Posterior vena cava (tissue), 2 donors: ENCODE measurements at regions of chr15 and their contacts with region 1.

Region 1: DNA sequence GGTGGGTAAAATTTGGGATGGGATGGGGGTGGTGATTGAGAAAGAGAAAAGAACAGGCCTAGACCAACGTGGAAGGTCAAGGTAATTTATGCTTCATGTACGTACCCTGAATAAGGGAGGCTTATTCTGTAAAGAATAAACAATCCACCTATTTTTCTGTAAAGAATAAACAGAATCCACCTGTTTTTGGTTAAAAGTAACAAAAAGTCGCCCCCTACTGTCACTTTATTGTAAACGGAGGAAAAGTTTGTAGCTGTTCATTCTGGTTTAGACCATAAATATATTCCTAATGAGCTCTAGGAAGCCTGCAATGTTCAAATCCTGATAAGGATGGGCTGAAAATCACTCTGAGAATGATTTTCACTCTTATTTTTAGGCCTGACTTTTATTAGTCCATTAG is 23.5 kb upstream of the SQOR start:
- DNase-seq: no peak

Region 2: DNA sequence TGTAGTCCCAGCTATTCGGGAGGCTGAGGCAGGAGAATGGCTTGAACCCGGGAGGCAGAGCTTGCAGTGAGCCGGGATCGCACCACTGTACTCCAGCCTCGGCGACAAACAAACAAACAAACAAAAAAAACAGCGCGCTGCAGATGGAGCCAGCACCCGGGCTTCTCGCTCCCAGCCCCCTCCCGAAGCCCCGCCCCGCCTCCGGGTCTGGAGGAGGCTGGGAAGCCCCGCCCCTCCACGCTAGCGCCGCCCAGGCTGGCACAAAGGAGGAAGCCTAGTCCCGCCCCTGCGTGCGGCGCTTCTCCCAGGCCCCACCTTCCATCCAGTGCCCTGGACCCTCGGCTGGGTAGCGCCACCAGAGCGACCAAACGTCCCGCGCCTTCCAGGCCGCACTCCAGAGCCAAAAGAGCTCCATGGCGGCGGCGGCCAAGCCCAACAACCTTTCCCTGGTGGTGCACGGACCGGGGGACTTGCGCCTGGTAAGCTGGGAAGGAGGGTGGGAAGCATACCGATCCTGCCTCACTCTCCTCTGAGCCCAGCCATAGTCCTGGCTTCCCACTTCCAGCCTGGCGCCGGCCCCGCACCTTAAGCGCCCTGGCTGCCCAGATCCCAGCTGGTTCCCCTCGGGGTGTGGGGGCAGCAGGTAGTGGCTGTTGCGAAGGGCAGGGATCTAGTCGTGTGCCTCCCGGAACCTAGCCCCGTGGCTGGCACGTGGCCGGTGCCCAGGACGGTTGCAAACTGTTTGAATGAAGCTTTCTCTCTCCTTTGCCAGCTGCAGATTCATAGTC is 588.2 kb before region 1 on chr15 and contains the start of gene SORD:
- intact Hi-C with region 1: no loop called
- DNase-seq: peak; percentile 97
- total RNA-seq, gene SORD: 6.7 to 9.3 TPM

Region 3: GRCh38 chr15:45457641-45458433 is 153.5 kb before region 1 on chr15:
- intact Hi-C with region 1: loop called in 1 of 2 experiments (anchors 10 kb)
- DNase-seq: no peak

Region 4: DNA sequence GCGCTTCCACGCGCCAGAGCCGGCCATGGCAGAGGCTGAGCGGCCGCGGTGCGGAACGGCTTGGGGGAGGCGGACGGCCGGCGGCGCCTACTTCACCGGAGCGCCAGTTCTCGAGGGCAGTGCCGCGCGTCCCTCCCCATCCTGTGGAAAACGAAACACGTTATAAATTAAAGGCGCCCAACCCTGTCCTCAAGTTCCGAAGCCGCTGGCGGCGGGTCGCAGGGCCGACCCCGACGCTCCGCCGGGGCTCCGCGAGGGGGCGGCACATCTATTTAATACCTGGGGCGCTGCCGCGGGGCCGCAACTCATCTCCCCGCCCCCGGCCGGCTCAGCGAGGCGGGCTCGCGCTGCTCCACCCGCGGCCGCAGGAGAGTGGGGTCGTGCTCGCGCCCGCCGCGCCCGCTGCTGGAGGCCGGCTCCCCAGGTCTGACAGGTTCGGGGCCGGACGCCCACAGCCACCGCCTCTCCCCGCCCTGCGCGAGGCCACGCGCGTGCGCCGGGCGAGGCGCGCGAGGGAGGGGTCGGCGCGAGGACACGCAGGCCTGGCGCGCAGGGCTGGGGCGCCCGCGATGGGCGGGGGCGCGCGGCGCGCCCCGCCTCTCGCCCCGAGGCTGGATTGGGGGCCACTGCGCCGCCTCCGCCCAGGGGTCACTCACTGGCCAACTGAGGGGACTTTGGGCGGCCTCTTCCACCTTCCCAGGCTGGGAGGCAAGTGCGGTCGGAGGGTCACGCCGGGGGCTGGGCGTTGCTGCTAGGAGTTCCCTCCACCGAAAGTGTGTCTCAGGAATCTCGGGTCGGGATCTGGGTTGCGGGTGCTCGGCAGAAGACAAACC is 88.8 kb before region 1 on chr15 and contains the start of gene SLC30A4:
- intact Hi-C with region 1: loop called (anchors 10 kb)
- DNase-seq: peak; percentile 89
- total RNA-seq, gene SLC30A4: 9.2 to 11.3 TPM